RWPE1 (cell line): ENCODE measurements at regions of chr21 and their contacts with region 1.

Region 1: GRCh38 chr21:35840197-35840799 is 220.0 kb downstream of the SETD4 start:
- DNase-seq: peak; percentile 54
- H3K27ac ChIP-seq: no peak overlapping the region
- CTCF ChIP-seq: peak; percentile 85

Region 2: DNA sequence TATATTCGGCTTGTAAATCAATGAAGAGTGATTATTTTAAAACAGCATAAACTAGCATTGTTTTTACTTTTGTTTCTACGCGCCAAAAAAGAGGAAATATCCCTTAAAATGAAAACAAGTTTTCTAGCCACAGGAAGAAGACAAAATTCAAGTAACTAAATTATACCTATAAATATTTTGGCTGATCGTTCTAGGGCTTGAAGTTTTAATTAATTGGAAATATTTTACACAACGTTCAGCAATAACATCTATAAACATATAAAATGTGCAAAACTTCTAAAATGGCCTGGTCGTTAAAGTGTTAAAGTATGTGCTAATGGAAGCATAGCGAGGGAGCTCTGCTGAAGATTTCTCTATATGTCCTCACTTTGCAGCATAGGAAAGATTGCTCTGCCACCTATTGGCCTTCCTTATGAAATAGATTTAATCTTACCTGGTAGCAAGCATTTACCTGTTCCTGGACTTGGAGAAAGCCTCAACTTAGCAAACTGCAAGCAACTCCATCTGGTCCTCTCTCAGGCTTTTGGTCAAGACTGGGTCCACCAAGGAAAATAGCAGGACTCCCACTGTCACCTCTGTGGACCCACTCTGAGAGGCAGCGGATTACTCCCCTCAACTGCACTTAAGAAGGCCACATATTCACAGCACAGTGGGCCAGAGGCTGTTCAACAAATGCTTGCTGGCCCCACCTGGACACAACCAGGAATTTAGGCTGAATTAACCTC is 439.9 kb before region 1 on chr21:
- CTCF ChIA-PET with region 1: interaction called, 12 read pairs
- POLR2A ChIA-PET with region 1: no interaction called
- DNase-seq: peak; percentile 62
- H3K27ac ChIP-seq: no peak overlapping the region
- CTCF ChIP-seq: peak; percentile 67

Region 3: GRCh38 chr21:35593000-35593502 is 247.2 kb before region 1 on chr21:
- CTCF ChIA-PET with region 1: no interaction called
- POLR2A ChIA-PET with region 1: no interaction called
- DNase-seq: peak; percentile 5
- H3K27ac ChIP-seq: no peak overlapping the region
- CTCF ChIP-seq: no peak

Region 4: DNA sequence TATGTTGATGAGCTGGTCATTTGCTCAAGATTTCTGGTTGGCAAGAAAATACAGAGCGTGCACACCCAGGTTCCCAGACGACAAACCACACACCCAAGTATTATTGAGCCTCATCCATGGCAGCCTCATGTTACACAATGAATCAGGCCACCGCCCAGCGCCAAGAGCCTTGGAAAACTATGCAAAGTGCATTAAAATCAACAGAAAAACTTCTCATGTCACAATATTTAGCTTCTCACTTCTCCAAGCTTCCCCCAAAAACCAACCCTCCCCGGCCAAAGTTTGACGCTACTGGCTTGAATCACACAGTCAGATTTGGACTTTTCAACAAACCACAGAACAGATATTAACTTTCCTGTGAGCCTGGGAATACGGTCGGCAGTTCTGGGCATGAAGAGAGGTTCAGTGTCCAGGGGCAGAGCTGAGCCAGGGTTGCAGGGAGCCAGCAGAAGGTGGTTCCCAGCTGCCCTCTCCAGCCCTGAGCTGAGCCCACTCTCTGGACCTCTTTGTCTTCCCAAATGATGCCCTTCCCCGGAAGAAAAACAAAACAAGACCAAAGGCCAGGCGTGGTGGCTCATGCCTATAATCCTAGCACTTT is 148.9 kb after region 1 on chr21:
- CTCF ChIA-PET with region 1: no interaction called
- POLR2A ChIA-PET with region 1: no interaction called
- DNase-seq: no peak
- H3K27ac ChIP-seq: no peak overlapping the region
- CTCF ChIP-seq: no peak